Naive thymus-derived CD4-positive, alpha-beta T cell (primary cell): ENCODE measurements at regions of chr11 and their contacts with region 1.

Region 1: DNA sequence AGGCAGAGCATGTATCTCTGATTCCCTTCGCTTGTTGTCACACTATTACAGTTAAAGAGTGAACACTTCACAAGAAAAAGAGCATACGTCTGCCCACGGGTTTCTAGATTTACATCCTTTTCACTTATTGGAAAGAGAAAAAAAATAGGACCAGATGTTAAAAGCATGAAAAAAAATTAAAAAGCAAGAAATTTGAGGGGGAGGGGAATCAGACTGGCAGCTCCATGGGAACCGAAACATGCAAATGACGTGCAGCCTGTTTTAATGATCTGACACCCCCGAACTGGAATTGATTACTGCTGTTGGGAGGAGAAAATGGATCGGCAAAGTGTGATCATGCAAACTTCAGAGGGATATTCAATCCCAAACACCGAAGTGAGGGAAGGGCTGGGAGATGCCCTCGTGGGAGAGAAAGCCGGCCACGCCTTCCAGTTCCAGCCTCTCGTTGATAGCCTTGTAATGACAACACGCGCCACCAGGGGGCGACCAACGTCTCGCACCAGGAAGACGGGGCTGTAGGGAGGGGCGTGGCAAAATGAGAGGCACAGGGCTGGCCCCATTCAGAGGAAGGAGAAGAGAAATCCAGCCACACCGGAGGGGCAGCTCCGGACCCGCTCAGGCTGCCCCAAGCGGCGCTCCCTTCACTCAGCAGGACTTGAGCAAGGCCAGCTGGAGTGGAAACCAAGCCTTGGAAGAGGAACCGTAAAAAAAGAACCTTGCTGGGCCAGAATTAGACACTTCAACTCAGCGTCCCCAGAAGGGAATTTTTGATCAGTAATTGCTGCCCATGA is 53.8 kb upstream of the SYT13 start:
- DNase-seq: peak; percentile 79 to 92 (median 87)
- ATAC-seq: peak; percentile 100
- H3K4me3 ChIP-seq: peak overlapping the region; percentile 47
- H3K4me3 Mint-ChIP-seq: peak overlapping the region; percentile 39 to 86 (median 64)
- H3K27ac ChIP-seq: no peak overlapping the region
- H3K27ac Mint-ChIP-seq: peak overlapping the region in 2 of 9 donors; percentile 57 to 70
- H3K4me1 ChIP-seq: peaks cover 0 to 7% of the 10 kb centered on the region in 2 donors
- H3K4me1 Mint-ChIP-seq: peaks cover 8 to 13% (median 11%) of the 10 kb centered on the region in 7 donors
- H3K27me3 ChIP-seq: no peaks in the 10 kb centered on the region
- H3K27me3 Mint-ChIP-seq: peaks cover 0 to 31% (median 2%) of the 10 kb centered on the region in 5 donors

Region 2: GRCh38 chr11:45097721-45098493 is 242.0 kb before region 1 on chr11:
- CTCF ChIA-PET with region 1: no interaction called
- POLR2A ChIA-PET with region 1: no interaction called
- intact Hi-C with region 1: no loop called
- DNase-seq: peak in 3 of 9 donors; percentile 32 to 46 (median 39)
- ATAC-seq: no peak
- H3K4me3 ChIP-seq: no peak overlapping the region
- H3K4me3 Mint-ChIP-seq: peak overlapping the region in 1 of 10 donors; percentile 19
- H3K27ac ChIP-seq: no peak overlapping the region
- H3K27ac Mint-ChIP-seq: peak overlapping the region in 1 of 9 donors; percentile 51
- H3K4me1 ChIP-seq: peaks cover 3 to 23% of the 10 kb centered on the region in 2 donors
- H3K4me1 Mint-ChIP-seq: peaks cover 4 to 34% (median 14%) of the 10 kb centered on the region in 7 donors
- H3K27me3 ChIP-seq: no peaks in the 10 kb centered on the region
- H3K27me3 Mint-ChIP-seq: peaks cover 4 to 32% (median 16%) of the 10 kb centered on the region in 5 donors

Region 3: GRCh38 chr11:45252134-45252855 is 87.6 kb before region 1 on chr11:
- CTCF ChIA-PET with region 1: no interaction called
- POLR2A ChIA-PET with region 1: no interaction called
- intact Hi-C with region 1: loop called in 1 of 2 experiments (anchors 10 kb)
- DNase-seq: peak in 3 of 9 donors; percentile 9 to 30 (median 16)
- ATAC-seq: no peak
- H3K4me3 ChIP-seq: no peak overlapping the region
- H3K4me3 Mint-ChIP-seq: no peak overlapping the region
- H3K27ac ChIP-seq: no peak overlapping the region
- H3K27ac Mint-ChIP-seq: no peak overlapping the region
- H3K4me1 ChIP-seq: no peaks in the 10 kb centered on the region
- H3K4me1 Mint-ChIP-seq: no peaks in the 10 kb centered on the region
- H3K27me3 ChIP-seq: no peaks in the 10 kb centered on the region
- H3K27me3 Mint-ChIP-seq: peaks cover 6 to 21% (median 17%) of the 10 kb centered on the region in 5 donors

Region 4: GRCh38 chr11:45354976-45355705 is 15.2 kb after region 1 on chr11:
- CTCF ChIA-PET with region 1: interaction called, 5 read pairs
- POLR2A ChIA-PET with region 1: no interaction called
- intact Hi-C with region 1: loop called (anchors 1 kb)
- DNase-seq: peak; percentile 77 to 91 (median 88)
- ATAC-seq: peak; percentile 96
- H3K4me3 ChIP-seq: peak overlapping the region; percentile 93
- H3K4me3 Mint-ChIP-seq: peak overlapping the region; percentile 75 to 87 (median 82)
- H3K27ac ChIP-seq: peak overlapping the region; percentile 73
- H3K27ac Mint-ChIP-seq: peak overlapping the region; percentile 70 to 91 (median 83)
- H3K4me1 ChIP-seq: peaks cover 0 to 5% of the 10 kb centered on the region in 2 donors
- H3K4me1 Mint-ChIP-seq: peaks cover 9 to 31% (median 26%) of the 10 kb centered on the region in 7 donors
- H3K27me3 ChIP-seq: no peaks in the 10 kb centered on the region
- H3K27me3 Mint-ChIP-seq: peaks cover 0 to 28% (median 7%) of the 10 kb centered on the region in 5 donors

Region 5: GRCh38 chr11:45385844-45386243 is 45.9 kb after region 1 on chr11:
- CTCF ChIA-PET with region 1: no interaction called
- POLR2A ChIA-PET with region 1: no interaction called
- intact Hi-C with region 1: loop called in 1 of 2 experiments (anchors 2 kb)
- DNase-seq: no peak
- ATAC-seq: peak; percentile 66
- H3K4me3 ChIP-seq: no peak overlapping the region
- H3K4me3 Mint-ChIP-seq: no peak overlapping the region
- H3K27ac ChIP-seq: no peak overlapping the region
- H3K27ac Mint-ChIP-seq: no peak overlapping the region
- H3K4me1 ChIP-seq: peaks cover 0 to 17% of the 10 kb centered on the region in 2 donors
- H3K4me1 Mint-ChIP-seq: peaks cover 0 to 16% (median 3%) of the 10 kb centered on the region in 7 donors
- H3K27me3 ChIP-seq: no peaks in the 10 kb centered on the region
- H3K27me3 Mint-ChIP-seq: peaks cover 5 to 40% (median 16%) of the 10 kb centered on the region in 5 donors